Activated CD8-positive, alpha-beta T cell treated with anti-CD3 and anti-CD28 coated beads, Interleukin-2, amount 10 ng/mL, durations not matched to agents 7 days and 5 days (primary cell): ENCODE measurements at regions of chr10 and their contacts with region 1.

Region 1: DNA sequence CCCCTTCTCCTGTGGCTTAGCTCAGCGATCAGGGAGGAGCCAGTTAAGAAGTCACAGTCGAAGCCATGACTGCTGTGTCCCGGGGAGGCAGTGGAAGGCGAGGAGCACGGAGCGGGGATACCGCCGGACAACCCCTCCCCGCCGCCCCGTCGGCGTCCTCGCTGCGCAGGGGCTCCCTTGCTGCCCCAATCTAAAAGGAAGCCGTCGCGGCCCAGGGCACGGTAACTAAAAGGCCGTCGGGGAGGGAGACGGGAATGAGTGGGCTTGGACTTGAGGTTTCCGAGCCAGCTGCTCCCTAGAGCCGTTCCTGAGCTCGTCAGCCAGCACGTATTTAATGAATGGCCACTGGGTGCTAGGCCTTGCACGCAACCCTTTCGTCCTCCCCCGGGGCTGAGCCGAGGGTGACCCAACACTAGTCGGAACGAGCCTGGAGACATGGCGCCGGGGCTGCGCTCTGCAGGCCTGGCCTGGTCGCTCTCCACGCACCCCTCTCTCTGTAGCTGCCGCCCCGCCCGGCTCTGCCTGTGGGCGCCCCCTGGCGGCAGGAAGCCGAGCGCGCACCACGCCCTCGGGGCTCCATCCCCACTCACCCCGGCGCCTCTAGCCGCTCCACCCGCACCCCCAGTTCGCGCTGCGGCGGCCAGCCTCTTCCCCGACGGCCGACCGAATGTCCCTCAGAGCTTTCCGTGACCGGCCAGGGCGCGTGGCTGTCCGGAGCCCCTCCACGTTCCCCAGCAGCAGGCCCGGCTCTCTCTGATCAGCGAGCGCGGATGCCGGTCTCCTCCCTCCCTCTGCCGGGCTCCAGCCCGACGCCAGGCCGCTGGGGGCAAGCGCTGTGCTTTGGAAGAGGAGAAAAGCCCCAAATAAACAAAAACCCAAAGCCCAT is 29.3 kb upstream of the KCNK18 start:
- DNase-seq: peak; percentile 61
- ATAC-seq: peak; percentile 93
- H3K4me3 Mint-ChIP-seq: no peak overlapping the region
- H3K27ac Mint-ChIP-seq: no peak overlapping the region
- H3K4me1 Mint-ChIP-seq: peaks cover 10% of the 10 kb centered on the region
- H3K27me3 Mint-ChIP-seq: peaks cover 69% of the 10 kb centered on the region

Region 2: DNA sequence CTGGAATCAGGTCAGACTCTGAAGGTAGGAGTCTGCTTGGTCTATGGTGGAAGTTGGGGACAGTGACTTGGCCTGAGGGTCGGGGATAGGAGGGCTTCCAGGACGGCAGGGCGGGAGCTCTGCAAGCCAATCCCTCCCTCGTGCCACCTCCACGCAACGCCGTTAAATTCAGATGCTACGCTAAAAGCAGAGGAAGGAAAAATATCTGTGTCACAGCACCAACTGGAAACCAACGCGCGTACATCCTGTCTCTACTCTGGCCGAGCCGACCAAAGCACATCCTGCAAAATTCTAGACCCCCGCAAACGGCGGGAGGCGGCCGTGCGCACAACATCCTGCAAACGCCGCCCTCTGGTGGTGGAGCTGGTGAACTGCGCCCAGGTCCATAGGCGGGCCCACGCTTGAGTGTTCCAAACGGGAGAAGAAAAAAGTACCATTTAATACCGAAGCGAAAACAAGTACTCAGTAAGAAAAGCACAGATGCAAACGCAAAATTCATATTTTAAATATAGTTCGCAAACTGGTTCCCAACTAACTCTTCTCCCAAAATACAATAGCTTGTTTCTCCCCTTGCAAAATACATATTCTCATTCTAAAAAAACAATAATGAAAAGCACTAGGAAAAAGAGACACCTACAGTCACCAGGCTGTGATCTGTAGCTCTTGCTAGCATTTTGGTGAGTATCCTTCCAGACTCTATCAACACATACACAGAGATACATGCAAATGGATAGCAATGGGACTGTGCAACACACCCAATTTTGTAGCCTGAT is 380.0 kb before region 1 on chr10:
- CTCF ChIA-PET with region 1: interaction called, 14 read pairs
- POLR2A ChIA-PET with region 1: interaction called, 3 read pairs
- DNase-seq: peak; percentile 88
- ATAC-seq: peak; percentile 91
- H3K4me3 Mint-ChIP-seq: peak overlapping the region; percentile 49
- H3K27ac Mint-ChIP-seq: peak overlapping the region; percentile 74
- H3K4me1 Mint-ChIP-seq: peaks cover 12% of the 10 kb centered on the region
- H3K27me3 Mint-ChIP-seq: peaks cover 11% of the 10 kb centered on the region

Region 3: GRCh38 chr10:117137031-117137910 is 30.8 kb before region 1 on chr10:
- CTCF ChIA-PET with region 1: interaction called, 19 read pairs
- POLR2A ChIA-PET with region 1: no interaction called
- DNase-seq: no peak
- ATAC-seq: no peak
- H3K4me3 Mint-ChIP-seq: peak overlapping the region; percentile 42
- H3K27ac Mint-ChIP-seq: peak overlapping the region; percentile 73
- H3K4me1 Mint-ChIP-seq: peaks cover 8% of the 10 kb centered on the region
- H3K27me3 Mint-ChIP-seq: peaks cover 72% of the 10 kb centered on the region